PC-9 (cell line): ENCODE measurements at regions of chr13 and their contacts with region 1.

Region 1: GRCh38 chr13:95279016-95279415 is 22.2 kb downstream of the ABCC4 start:
- DNase-seq: no peak
- H3K4me3 ChIP-seq: no peak overlapping the region
- H3K27ac ChIP-seq: no peak overlapping the region
- H3K4me1 ChIP-seq: peaks cover 30% of the 10 kb centered on the region
- H3K27me3 ChIP-seq: no peaks in the 10 kb centered on the region
- CTCF ChIP-seq: no peak

Region 2: DNA sequence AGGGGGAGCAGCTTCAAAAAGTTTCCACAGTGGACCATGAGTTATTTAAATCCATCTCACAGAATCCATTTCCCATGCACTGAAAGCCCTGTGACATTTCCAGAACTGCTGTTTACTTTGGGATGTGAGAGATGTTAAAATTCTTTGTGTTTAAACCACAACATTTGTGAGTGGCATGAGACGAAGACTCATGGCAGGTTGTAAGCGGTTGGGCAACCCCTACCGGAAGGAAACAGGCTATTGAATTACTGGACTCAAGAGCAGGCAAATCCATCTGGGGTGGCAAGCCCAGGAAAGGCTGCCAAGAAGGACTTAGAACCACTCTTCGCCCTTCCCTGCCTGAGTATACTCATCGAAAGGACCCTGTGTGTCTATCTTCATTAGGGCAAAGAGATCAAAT is 251.2 kb after region 1 on chr13:
- CTCF ChIA-PET with region 1: no interaction called
- POLR2A ChIA-PET with region 1: no interaction called
- intact Hi-C with region 1: no loop called
- DNase-seq: peak; percentile 44 to 85
- H3K4me3 ChIP-seq: no peak overlapping the region
- H3K27ac ChIP-seq: peak overlapping the region; percentile 23
- H3K4me1 ChIP-seq: peaks cover 50% of the 10 kb centered on the region
- H3K27me3 ChIP-seq: no peaks in the 10 kb centered on the region
- CTCF ChIP-seq: no peak

Region 3: GRCh38 chr13:95784900-95785290 is 505.9 kb after region 1 on chr13:
- CTCF ChIA-PET with region 1: interaction called, 14 read pairs
- POLR2A ChIA-PET with region 1: no interaction called
- intact Hi-C with region 1: no loop called
- DNase-seq: no peak
- H3K4me3 ChIP-seq: no peak overlapping the region
- H3K27ac ChIP-seq: no peak overlapping the region
- H3K4me1 ChIP-seq: peaks cover 8% of the 10 kb centered on the region
- H3K27me3 ChIP-seq: no peaks in the 10 kb centered on the region
- CTCF ChIP-seq: no peak